Calu3 (cell line): ENCODE measurements at regions of chr2 and their contacts with region 1.

Region 1: GRCh38 chr2:62787386-62787785 is 81.9 kb downstream of the EHBP1 start:
- DNase-seq: no peak
- H3K4me3 Mint-ChIP-seq: no peak overlapping the region
- H3K27ac Mint-ChIP-seq: no peak overlapping the region
- H3K4me1 Mint-ChIP-seq: peaks cover 50% of the 10 kb centered on the region
- H3K27me3 Mint-ChIP-seq: no peaks in the 10 kb centered on the region
- CTCF ChIP-seq: no peak

Region 2: DNA sequence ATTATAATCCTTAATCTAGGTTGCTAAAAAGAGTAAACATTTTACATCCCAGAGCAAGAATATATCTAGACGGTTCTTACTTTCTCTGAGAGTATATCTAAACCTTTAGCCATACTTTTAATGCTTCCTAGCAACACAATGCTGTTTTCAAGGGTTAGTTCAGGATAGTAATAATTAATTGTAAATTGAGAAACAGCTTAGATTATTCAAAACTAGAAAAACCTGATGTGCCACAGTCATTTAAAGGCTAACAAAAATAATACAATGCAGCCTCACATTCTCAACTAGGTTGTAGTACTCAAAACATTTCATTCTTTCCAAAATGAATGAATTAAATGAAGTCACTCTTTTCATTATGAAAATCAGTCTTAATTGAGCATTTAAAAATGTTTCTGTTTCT is 160.0 kb after region 1 on chr2:
- CTCF ChIA-PET with region 1: no interaction called
- intact Hi-C with region 1: loop called (anchors 5 kb)
- DNase-seq: no peak
- H3K4me3 Mint-ChIP-seq: no peak overlapping the region
- H3K27ac Mint-ChIP-seq: peak overlapping the region; percentile 64
- H3K4me1 Mint-ChIP-seq: peaks cover 17% of the 10 kb centered on the region
- H3K27me3 Mint-ChIP-seq: no peaks in the 10 kb centered on the region
- CTCF ChIP-seq: no peak

Region 3: GRCh38 chr2:63023444-63023843 is 236.1 kb after region 1 on chr2:
- CTCF ChIA-PET with region 1: no interaction called
- intact Hi-C with region 1: loop called (anchors 1 kb)
- DNase-seq: peak; percentile 39
- H3K4me3 Mint-ChIP-seq: no peak overlapping the region
- H3K27ac Mint-ChIP-seq: no peak overlapping the region
- H3K4me1 Mint-ChIP-seq: no peaks in the 10 kb centered on the region
- H3K27me3 Mint-ChIP-seq: no peaks in the 10 kb centered on the region
- CTCF ChIP-seq: peak; percentile 31

Region 4: GRCh38 chr2:63488118-63488713 is 700.8 kb after region 1 on chr2:
- CTCF ChIA-PET with region 1: no interaction called
- intact Hi-C with region 1: loop called (anchors 2 kb)
- DNase-seq: peak; percentile 39
- H3K4me3 Mint-ChIP-seq: no peak overlapping the region
- H3K27ac Mint-ChIP-seq: no peak overlapping the region
- H3K4me1 Mint-ChIP-seq: no peaks in the 10 kb centered on the region
- H3K27me3 Mint-ChIP-seq: no peaks in the 10 kb centered on the region
- CTCF ChIP-seq: peak; percentile 15

Region 5: GRCh38 chr2:63544017-63544627 is 756.7 kb after region 1 on chr2:
- CTCF ChIA-PET with region 1: no interaction called
- intact Hi-C with region 1: loop called (anchors 1 kb)
- DNase-seq: no peak
- H3K4me3 Mint-ChIP-seq: no peak overlapping the region
- H3K27ac Mint-ChIP-seq: no peak overlapping the region
- H3K4me1 Mint-ChIP-seq: no peaks in the 10 kb centered on the region
- H3K27me3 Mint-ChIP-seq: no peaks in the 10 kb centered on the region
- CTCF ChIP-seq: no peak